Activated T-helper 1 cell treated with anti-CD3 and anti-CD28 coated beads, Interleukin-12 subunit alpha, Interleukin-12 subunit beta, Interleukin-2, Interleukin-4 antibody, amounts not matched to agents 30 ng/mL and 10 ng/mL and 1 ng/mL, durations not matched to agents 14 hours and 24 hours and 36 hours (primary cell): ENCODE measurements at regions of chr4 and their contacts with region 1.

Region 1: GRCh38 chr4:1200425-1201035 is 28.1 kb upstream of the SPON2 start:
- DNase-seq: no peak
- H3K4me3 Mint-ChIP-seq: peak overlapping the region; percentile 75
- H3K27ac Mint-ChIP-seq: peak overlapping the region; percentile 100
- H3K4me1 Mint-ChIP-seq: peaks cover 41% of the 10 kb centered on the region
- H3K27me3 Mint-ChIP-seq: no peaks in the 10 kb centered on the region

Region 2: DNA sequence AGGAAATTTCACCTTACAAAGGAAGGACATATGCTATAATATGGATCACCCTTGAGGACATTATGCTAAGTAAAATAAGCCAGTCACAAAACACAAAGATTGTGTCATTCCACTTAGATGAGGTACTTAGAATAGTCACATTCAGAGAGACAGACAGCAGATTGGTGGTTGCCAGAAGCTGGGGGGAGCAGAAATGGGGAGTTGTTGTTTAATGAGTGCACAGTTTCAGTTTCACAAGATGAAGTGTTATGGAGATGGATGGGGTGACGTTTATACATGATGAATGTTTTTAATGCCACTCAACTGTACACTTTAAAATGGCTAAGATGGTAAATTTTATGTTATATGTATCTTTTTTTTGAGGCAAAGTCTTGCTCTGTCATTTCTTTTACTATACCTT is 13.3 kb before region 1 on chr4:
- intact Hi-C with region 1: loop called (anchors 1 kb)
- DNase-seq: peak; percentile 34
- H3K4me3 Mint-ChIP-seq: no peak overlapping the region
- H3K27ac Mint-ChIP-seq: peak overlapping the region; percentile 28
- H3K4me1 Mint-ChIP-seq: peaks cover 30% of the 10 kb centered on the region
- H3K27me3 Mint-ChIP-seq: no peaks in the 10 kb centered on the region

Region 3: DNA sequence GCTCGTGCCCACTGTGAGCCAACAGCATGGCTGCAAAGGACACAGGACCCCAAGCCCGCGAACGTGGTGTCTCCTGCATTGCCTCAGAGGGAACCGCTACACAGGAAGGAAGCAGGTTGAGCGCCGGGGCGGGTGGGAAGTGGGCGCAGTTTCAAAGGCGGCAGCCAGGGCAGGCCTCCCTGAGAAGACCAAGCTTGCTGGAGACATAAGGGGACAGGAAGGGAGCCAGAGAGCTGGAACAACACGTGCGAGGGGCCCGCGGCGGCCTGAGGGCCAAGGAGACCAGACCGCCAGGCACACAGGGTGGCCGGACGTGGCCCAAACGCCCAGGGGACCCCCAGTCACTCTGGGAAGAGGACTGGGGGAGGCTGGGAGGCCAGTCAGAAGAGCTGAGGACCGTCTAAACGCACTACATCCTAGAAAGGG is 16.4 kb after region 1 on chr4:
- intact Hi-C with region 1: loop called (anchors 1 kb)
- DNase-seq: peak; percentile 61
- H3K4me3 Mint-ChIP-seq: peak overlapping the region; percentile 60
- H3K27ac Mint-ChIP-seq: peak overlapping the region; percentile 87
- H3K4me1 Mint-ChIP-seq: peaks cover 27% of the 10 kb centered on the region
- H3K27me3 Mint-ChIP-seq: no peaks in the 10 kb centered on the region

Region 4: GRCh38 chr4:1249148-1249730 is 48.7 kb after region 1 on chr4:
- intact Hi-C with region 1: loop called (anchors 1 kb)
- DNase-seq: peak; percentile 83
- H3K4me3 Mint-ChIP-seq: peak overlapping the region; percentile 89
- H3K27ac Mint-ChIP-seq: peak overlapping the region; percentile 96
- H3K4me1 Mint-ChIP-seq: peaks cover 57% of the 10 kb centered on the region
- H3K27me3 Mint-ChIP-seq: no peaks in the 10 kb centered on the region

Region 5: GRCh38 chr4:1297456-1298325 is 97.2 kb after region 1 on chr4:
- intact Hi-C with region 1: no loop called
- DNase-seq: no peak
- H3K4me3 Mint-ChIP-seq: no peak overlapping the region
- H3K27ac Mint-ChIP-seq: no peak overlapping the region
- H3K4me1 Mint-ChIP-seq: peaks cover 7% of the 10 kb centered on the region
- H3K27me3 Mint-ChIP-seq: no peaks in the 10 kb centered on the region